Endothelial cell of umbilical vein (primary cell): ENCODE measurements at regions of chr9 and their contacts with region 1.

Region 1: DNA sequence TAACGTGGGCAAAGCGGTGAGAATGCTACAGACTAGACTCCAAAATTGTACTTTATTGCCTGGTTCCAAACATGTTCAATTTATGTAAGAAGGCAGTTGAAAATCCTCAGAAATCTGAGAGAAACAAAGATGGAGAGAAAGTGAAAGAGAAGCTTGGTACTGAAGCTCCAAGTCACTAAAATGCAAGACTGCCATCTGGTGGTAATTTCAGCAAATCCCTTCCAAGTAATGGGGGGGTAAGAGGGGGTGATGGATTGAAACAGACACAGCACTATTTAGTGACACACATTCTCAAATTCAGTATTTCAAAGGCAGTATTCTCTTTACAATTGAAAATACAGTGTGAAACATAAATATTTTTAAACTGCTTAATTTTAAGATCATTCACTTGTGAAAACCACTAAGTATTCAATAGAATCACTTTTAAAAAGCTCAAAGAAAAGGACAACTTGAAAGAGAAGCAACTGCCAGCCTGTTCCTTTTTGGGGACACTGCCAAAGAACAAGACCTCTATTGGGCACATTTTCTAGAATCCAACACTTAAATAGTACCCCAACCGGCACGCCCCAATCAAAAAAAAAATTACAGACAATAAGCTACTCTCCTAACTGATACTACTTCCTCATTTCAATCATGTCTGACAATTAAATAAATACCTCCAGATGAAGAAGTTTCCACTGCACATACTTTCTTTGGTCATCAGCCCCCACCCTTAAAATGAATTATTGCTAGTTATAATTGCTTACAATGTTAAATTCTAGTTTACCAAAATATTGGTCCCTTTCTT is 131.5 kb downstream of the AGTPBP1 start:
- DNase-seq: peak; percentile 74
- H3K4me3 ChIP-seq: peak overlapping the region in 1 of 3 experiments; percentile 15
- H3K27ac ChIP-seq: no peak overlapping the region
- H3K4me1 ChIP-seq: peaks cover 2% of the 10 kb centered on the region
- H3K27me3 ChIP-seq: no peaks in the 10 kb centered on the region
- CTCF ChIP-seq: peak; percentile 68 to 76
- POLR2A ChIP-seq: no peak

Region 2: GRCh38 chr9:84404095-84404686 is 1206.1 kb before region 1 on chr9:
- CTCF ChIA-PET with region 1: interaction called, 12 read pairs
- POLR2A ChIA-PET with region 1: no interaction called
- dilution Hi-C with region 1: no loop called
- intact Hi-C with region 1: no loop called
- DNase-seq: peak; percentile 3
- H3K4me3 ChIP-seq: no peak overlapping the region
- H3K27ac ChIP-seq: no peak overlapping the region
- H3K4me1 ChIP-seq: no peaks in the 10 kb centered on the region
- H3K27me3 ChIP-seq: no peaks in the 10 kb centered on the region
- CTCF ChIP-seq: peak; percentile 54 to 55
- POLR2A ChIP-seq: no peak

Region 3: DNA sequence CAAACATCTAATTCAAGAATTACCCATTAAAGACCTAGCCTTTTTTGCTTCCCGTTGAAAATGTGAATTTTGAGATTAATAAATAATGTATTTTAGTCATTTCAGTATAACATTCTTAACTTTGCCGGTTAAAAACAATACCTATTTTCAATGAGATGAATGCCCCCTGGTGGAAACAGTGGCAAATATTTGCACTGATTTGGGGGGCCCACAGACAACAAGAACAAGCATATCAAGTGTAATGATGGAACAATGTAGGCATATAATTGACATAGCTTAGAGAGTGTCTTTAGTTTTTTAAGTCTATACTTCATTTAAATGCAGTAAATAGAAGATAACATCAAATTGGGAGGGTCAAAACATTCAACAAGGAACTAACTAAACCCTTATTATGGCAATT is 828.8 kb before region 1 on chr9:
- CTCF ChIA-PET with region 1: interaction called, 4 read pairs
- POLR2A ChIA-PET with region 1: no interaction called
- dilution Hi-C with region 1: no loop called
- intact Hi-C with region 1: loop called (anchors 5 kb)
- DNase-seq: peak; percentile 33
- H3K4me3 ChIP-seq: no peak overlapping the region
- H3K27ac ChIP-seq: no peak overlapping the region
- H3K4me1 ChIP-seq: peaks cover 7% of the 10 kb centered on the region
- H3K27me3 ChIP-seq: no peaks in the 10 kb centered on the region
- CTCF ChIP-seq: peak; percentile 30
- POLR2A ChIP-seq: no peak

Region 4: DNA sequence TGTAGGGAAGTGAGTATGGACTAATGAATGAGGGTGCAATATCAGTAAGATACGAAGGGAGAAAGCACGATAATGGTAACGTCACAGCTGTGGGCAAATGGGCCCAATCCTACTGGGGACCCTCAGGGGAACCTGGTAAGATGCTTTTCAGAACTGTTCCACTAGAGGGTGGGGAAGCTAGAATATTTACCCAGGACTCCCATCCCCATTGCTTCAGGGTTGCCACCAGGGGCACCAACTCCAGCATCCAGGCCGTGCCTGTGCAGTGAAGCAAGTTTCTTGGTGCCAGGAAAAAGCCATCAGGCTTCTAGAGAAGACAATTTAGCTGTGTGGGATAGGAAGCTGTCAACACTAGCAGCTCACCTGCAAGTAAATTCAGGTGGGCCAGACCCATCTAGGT is 277.8 kb before region 1 on chr9:
- CTCF ChIA-PET with region 1: interaction called, 13 read pairs
- POLR2A ChIA-PET with region 1: no interaction called
- dilution Hi-C with region 1: no loop called
- intact Hi-C with region 1: loop called (anchors 1 kb)
- DNase-seq: peak; percentile 5
- H3K4me3 ChIP-seq: no peak overlapping the region
- H3K27ac ChIP-seq: no peak overlapping the region
- H3K4me1 ChIP-seq: no peaks in the 10 kb centered on the region
- H3K27me3 ChIP-seq: no peaks in the 10 kb centered on the region
- CTCF ChIP-seq: peak; percentile 4 to 34
- POLR2A ChIP-seq: no peak

Region 5: GRCh38 chr9:85478847-85479246 is 131.4 kb before region 1 on chr9:
- CTCF ChIA-PET with region 1: interaction called, 12 read pairs
- POLR2A ChIA-PET with region 1: no interaction called
- dilution Hi-C with region 1: no loop called
- intact Hi-C with region 1: no loop called
- DNase-seq: no peak
- H3K4me3 ChIP-seq: no peak overlapping the region
- H3K27ac ChIP-seq: no peak overlapping the region
- H3K4me1 ChIP-seq: no peaks in the 10 kb centered on the region
- H3K27me3 ChIP-seq: peaks cover 0 to 7% of the 10 kb centered on the region in 2 experiments
- CTCF ChIP-seq: no peak
- POLR2A ChIP-seq: no peak

Region 6: DNA sequence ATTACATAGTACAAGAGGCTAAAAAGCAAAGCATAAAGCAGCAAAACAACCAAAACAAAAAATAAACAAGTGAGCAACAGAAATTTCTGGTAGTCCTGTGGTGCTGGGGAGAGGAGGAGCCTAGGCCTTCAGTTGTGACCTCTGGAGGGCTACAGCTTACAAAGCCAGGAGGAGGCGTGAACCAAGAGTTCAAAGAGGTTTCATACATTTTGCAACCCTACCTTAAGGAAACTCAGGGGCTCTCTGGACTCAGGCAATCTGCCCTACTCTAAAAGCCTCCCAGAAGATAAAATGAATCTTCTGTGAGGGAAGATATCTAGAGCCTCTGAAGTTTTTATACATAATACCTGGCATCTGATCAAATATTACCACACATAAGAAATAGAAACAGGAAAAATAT is 55.9 kb before region 1 on chr9:
- CTCF ChIA-PET with region 1: interaction called, 11 read pairs
- POLR2A ChIA-PET with region 1: no interaction called
- dilution Hi-C with region 1: no loop called
- intact Hi-C with region 1: no loop called
- DNase-seq: no peak
- H3K4me3 ChIP-seq: no peak overlapping the region
- H3K27ac ChIP-seq: no peak overlapping the region
- H3K4me1 ChIP-seq: no peaks in the 10 kb centered on the region
- H3K27me3 ChIP-seq: no peaks in the 10 kb centered on the region
- CTCF ChIP-seq: no peak
- POLR2A ChIP-seq: no peak

Region 7: DNA sequence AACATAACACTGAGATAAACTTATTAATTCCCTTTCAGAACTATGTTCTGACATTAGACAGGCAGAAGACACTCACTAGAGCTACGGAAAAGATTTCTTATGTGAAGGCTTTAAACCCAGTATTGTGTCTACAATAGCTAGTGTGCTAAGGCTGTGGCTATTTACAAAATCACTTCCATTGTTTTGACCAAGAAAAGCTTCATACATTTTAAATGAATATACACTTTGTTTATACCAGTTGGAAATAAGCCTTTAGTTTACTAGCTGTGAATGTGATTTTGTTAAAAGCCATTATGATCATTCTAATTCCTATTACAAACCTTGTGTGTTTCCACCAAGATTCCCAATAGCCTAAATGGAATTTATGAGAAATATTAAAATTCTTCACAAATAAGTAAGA is 48.4 kb after region 1 on chr9:
- CTCF ChIA-PET with region 1: interaction called, 12 read pairs
- POLR2A ChIA-PET with region 1: no interaction called
- dilution Hi-C with region 1: no loop called
- intact Hi-C with region 1: no loop called
- DNase-seq: no peak
- H3K4me3 ChIP-seq: no peak overlapping the region
- H3K27ac ChIP-seq: no peak overlapping the region
- H3K4me1 ChIP-seq: no peaks in the 10 kb centered on the region
- H3K27me3 ChIP-seq: no peaks in the 10 kb centered on the region
- CTCF ChIP-seq: no peak
- POLR2A ChIP-seq: no peak

Region 8: GRCh38 chr9:85940832-85941621 is 330.8 kb after region 1 on chr9 and contains the start of gene NAA35:
- CTCF ChIA-PET with region 1: no interaction called
- POLR2A ChIA-PET with region 1: no interaction called
- dilution Hi-C with region 1: no loop called
- intact Hi-C with region 1: no loop called
- DNase-seq: peak; percentile 99
- H3K4me3 ChIP-seq: peak within 1 kb of the TSS; percentile 68 to 94 (median 91)
- H3K27ac ChIP-seq: peak within 1 kb of the TSS; percentile 83
- H3K4me1 ChIP-seq: peaks cover 13% of the 10 kb centered on the region
- H3K27me3 ChIP-seq: no peaks in the 10 kb centered on the region
- CTCF ChIP-seq: no peak
- POLR2A ChIP-seq: no peak
- total RNA-seq, gene NAA35: 22.5 and 23.3 TPM in 2 replicates